GM12878 (cell line): ENCODE measurements at regions of chr9 and their contacts with region 1.

Region 1: DNA sequence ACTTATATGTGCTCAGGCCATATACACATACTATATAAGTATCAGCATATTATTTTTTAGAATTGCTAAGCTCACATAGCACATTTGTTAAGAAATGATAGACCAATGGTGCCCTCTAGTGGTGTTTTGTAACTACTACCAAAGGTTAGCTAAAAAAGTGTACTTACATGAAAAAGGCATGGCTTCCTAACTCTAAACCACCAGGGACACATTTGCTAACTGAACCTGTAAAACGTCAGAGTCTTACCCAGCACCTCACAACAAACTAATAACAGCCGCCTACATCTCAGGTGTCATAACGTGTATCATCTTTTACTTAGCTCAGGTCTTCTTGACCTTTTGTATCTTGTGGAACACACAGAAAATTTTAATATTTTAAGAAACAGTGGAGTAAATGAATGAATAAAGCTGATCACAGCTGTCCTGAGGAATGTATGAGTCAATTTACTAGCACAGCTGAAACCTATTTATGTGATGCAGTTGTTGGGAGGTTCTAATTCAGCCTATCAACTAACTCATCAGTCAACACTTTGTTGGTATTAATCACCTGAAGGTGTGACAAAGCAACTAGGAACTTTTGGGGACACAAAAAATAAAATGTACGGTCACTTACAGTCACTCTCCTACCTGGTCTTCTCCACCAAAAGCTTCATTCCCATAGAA is 72.9 kb downstream of the BAAT start:
- DNase-seq: peak; percentile 23
- ATAC-seq: peak; percentile 93
- H3K4me3 ChIP-seq: no peak overlapping the region
- H3K27ac ChIP-seq: no peak overlapping the region
- H3K4me1 ChIP-seq: no peaks in the 10 kb centered on the region
- H3K27me3 ChIP-seq: no peaks in the 10 kb centered on the region
- CTCF ChIP-seq: peak; percentile 46 to 72 (median 65); a peak in 4 of 6 replicates
- EP300 ChIP-seq: no peak
- POLR2A ChIP-seq: no peak
- RAD21 ChIP-seq: peak; percentile 75

Region 2: GRCh38 chr9:100700689-100701318 is 611.1 kb before region 1 on chr9:
- CTCF ChIA-PET with region 1: interaction called, 32 read pairs
- POLR2A ChIA-PET with region 1: no interaction called
- RAD21 ChIA-PET with region 1: interaction called, 8 read pairs
- SMC1A ChIA-PET with region 1: interaction called, 7 read pairs
- in situ Hi-C with region 1: no loop called
- intact Hi-C with region 1: loop called (anchors 2 kb)
- DNase-seq: no peak
- ATAC-seq: peak; percentile 76
- H3K4me3 ChIP-seq: no peak overlapping the region
- H3K27ac ChIP-seq: no peak overlapping the region
- H3K4me1 ChIP-seq: no peaks in the 10 kb centered on the region
- H3K27me3 ChIP-seq: no peaks in the 10 kb centered on the region
- CTCF ChIP-seq: peak; percentile 38 to 46 (median 45); a peak in 4 of 6 replicates
- EP300 ChIP-seq: no peak
- POLR2A ChIP-seq: no peak
- RAD21 ChIP-seq: peak; percentile 28; the same call in 1 of the 2 replicates

Region 3: GRCh38 chr9:100714372-100715099 is 597.4 kb before region 1 on chr9:
- CTCF ChIA-PET with region 1: interaction called, 45 read pairs
- POLR2A ChIA-PET with region 1: no interaction called
- RAD21 ChIA-PET with region 1: interaction called, 15 read pairs
- SMC1A ChIA-PET with region 1: interaction called, 18 read pairs
- in situ Hi-C with region 1: loop called (anchors 5 kb)
- intact Hi-C with region 1: loop called (anchors 1 kb)
- DNase-seq: no peak
- ATAC-seq: peak; percentile 84
- H3K4me3 ChIP-seq: no peak overlapping the region
- H3K27ac ChIP-seq: no peak overlapping the region
- H3K4me1 ChIP-seq: no peaks in the 10 kb centered on the region
- H3K27me3 ChIP-seq: no peaks in the 10 kb centered on the region
- CTCF ChIP-seq: peak; percentile 78 to 84 (median 81)
- EP300 ChIP-seq: no peak
- POLR2A ChIP-seq: no peak
- RAD21 ChIP-seq: peak; percentile 71

Region 4: GRCh38 chr9:101119206-101119819 is 192.6 kb before region 1 on chr9:
- CTCF ChIA-PET with region 1: interaction called, 27 read pairs
- POLR2A ChIA-PET with region 1: no interaction called
- RAD21 ChIA-PET with region 1: interaction called, 15 read pairs
- SMC1A ChIA-PET with region 1: interaction called, 12 read pairs
- in situ Hi-C with region 1: loop called (anchors 5 kb)
- intact Hi-C with region 1: loop called (anchors 1 kb)
- DNase-seq: no peak
- ATAC-seq: peak; percentile 98
- H3K4me3 ChIP-seq: no peak overlapping the region
- H3K27ac ChIP-seq: no peak overlapping the region
- H3K4me1 ChIP-seq: no peaks in the 10 kb centered on the region
- H3K27me3 ChIP-seq: no peaks in the 10 kb centered on the region
- CTCF ChIP-seq: peak; percentile 72 to 83 (median 80)
- EP300 ChIP-seq: no peak
- POLR2A ChIP-seq: no peak
- RAD21 ChIP-seq: peak; percentile 66

Region 5: GRCh38 chr9:101299901-101300300 is 12.0 kb before region 1 on chr9:
- CTCF ChIA-PET with region 1: interaction called, 15 read pairs
- POLR2A ChIA-PET with region 1: no interaction called
- RAD21 ChIA-PET with region 1: interaction called, 5 read pairs
- SMC1A ChIA-PET with region 1: interaction called, 3 read pairs
- in situ Hi-C with region 1: no loop called
- intact Hi-C with region 1: no loop called
- DNase-seq: no peak
- ATAC-seq: no peak
- H3K4me3 ChIP-seq: no peak overlapping the region
- H3K27ac ChIP-seq: no peak overlapping the region
- H3K4me1 ChIP-seq: no peaks in the 10 kb centered on the region
- H3K27me3 ChIP-seq: no peaks in the 10 kb centered on the region; a peak in 1 of 4 replicates
- CTCF ChIP-seq: no peak
- EP300 ChIP-seq: no peak
- POLR2A ChIP-seq: no peak
- RAD21 ChIP-seq: no peak

Region 6: DNA sequence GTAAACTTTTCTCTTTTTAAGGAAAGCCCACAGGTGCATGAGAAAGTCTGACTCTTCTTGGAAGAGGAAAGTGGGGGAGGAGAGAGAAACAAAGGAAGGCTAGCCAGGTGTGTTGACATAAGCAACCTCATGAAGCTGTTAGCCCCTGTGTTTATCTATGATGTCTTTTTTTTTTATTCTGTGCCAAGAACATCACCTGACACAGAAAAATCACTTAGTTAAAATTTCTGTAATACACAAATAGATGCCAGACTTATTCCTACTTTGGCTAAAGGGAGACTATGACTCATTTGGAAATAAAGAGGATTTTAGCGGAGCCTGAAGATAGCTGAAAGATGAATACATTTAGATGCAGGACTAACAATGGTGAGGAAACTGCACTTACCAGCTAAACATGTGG is 14.6 kb after region 1 on chr9:
- CTCF ChIA-PET with region 1: interaction called, 17 read pairs
- POLR2A ChIA-PET with region 1: no interaction called
- RAD21 ChIA-PET with region 1: interaction called, 3 read pairs
- SMC1A ChIA-PET with region 1: no interaction called
- in situ Hi-C with region 1: no loop called
- intact Hi-C with region 1: no loop called
- DNase-seq: no peak
- ATAC-seq: no peak
- H3K4me3 ChIP-seq: no peak overlapping the region
- H3K27ac ChIP-seq: no peak overlapping the region
- H3K4me1 ChIP-seq: no peaks in the 10 kb centered on the region
- H3K27me3 ChIP-seq: no peaks in the 10 kb centered on the region
- CTCF ChIP-seq: no peak
- EP300 ChIP-seq: no peak
- POLR2A ChIP-seq: no peak
- RAD21 ChIP-seq: no peak

Region 7: DNA sequence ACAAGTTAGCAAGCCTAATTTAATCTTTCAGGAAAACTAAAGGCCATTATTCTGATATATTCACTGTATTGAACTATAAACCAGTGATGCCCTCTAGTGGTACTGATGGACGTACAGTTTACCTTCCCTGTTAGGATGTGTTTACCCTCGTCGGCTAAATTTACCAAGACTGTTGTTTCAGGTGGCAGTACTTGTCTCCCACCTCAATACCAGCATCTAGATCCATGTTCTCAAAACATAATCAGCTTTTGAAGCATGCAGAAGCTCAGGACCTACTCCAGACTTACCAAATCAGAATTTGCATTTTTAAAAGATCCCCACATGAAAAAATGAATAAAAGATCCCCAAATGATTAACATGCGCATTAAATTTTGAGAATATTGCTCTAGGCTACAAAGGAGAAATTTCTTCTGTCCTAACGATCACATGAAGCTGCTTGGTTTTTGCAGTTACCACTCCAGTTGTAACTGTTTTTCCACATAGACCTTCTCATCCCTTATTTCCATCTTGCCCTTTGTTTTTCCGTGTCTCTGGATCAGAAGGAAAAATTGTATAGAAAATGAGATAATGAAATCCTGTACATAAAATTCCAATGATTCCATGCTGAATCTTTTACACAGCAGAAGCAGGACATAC is 76.1 kb after region 1 on chr9:
- CTCF ChIA-PET with region 1: interaction called, 15 read pairs
- POLR2A ChIA-PET with region 1: no interaction called
- RAD21 ChIA-PET with region 1: interaction called, 3 read pairs
- SMC1A ChIA-PET with region 1: interaction called, 3 read pairs
- in situ Hi-C with region 1: no loop called
- intact Hi-C with region 1: no loop called
- DNase-seq: no peak
- ATAC-seq: peak; percentile 85
- H3K4me3 ChIP-seq: no peak overlapping the region
- H3K27ac ChIP-seq: no peak overlapping the region
- H3K4me1 ChIP-seq: no peaks in the 10 kb centered on the region
- H3K27me3 ChIP-seq: no peaks in the 10 kb centered on the region
- CTCF ChIP-seq: peak; percentile 35 to 42 (median 40); a peak in 5 of 6 replicates
- EP300 ChIP-seq: no peak
- POLR2A ChIP-seq: no peak
- RAD21 ChIP-seq: 0 out of 2 replicates have a peak, but pooled peaks have one; percentile 10